ENCODE measurements at regions of chr7 and their contacts with region 1.

Region 1: GRCh38 chr7:100793806-100794660 is 33.3 kb downstream of the EPHB4 start:
- DNase-seq: no peak
- H3K4me3 ChIP-seq: no peak overlapping the region
- H3K27ac ChIP-seq: no peak overlapping the region
- H3K4me1 ChIP-seq: no peaks in the 10 kb centered on the region
- H3K27me3 ChIP-seq: peaks cover 20% of the 10 kb centered on the region
- CTCF ChIP-seq: no peak
- EP300 ChIP-seq: no peak
- POLR2A ChIP-seq: no peak

Region 2: DNA sequence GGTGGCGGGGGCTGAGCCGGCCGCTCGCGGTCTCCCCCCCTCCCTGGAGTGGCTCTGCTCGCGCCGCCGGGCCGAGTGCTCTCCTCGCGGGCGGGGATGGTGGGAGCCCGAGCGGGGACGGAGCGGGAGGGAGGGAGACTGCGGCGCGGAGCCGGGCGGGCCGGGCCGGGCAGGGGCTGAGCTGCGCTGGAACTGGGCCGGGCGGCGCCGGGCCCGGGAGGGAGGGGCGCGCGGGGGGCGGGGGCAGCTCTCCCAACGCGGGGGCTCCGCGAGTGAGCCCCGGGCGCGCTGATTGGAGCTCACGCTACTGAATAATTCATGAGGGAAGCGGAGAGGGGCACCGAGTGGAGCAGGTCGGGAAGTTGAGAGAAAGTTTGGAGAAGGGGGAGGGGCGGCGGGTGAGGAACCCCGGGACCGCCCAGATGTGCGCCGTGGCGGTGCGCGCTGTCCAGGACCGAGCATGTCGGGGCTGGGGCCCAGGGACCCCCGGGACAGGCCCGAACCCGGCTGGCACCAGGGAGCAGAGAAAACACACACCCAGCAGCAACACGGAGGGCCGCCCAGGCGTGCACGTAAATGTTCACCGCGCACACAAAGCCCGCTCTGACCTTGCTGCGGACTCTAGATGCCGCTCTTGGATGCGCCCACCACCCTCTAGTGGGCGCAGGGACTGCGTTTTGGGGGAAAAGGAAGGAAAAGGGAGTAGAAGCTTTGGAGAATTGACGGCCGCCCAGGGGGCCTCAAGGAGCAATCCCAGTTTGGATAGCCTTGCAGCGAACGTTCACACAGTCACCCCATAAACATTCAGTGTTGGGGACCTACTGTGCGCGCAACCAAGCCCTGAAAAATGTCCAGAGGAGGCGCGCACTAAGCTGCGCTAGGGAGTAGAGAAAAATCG is 33.5 kb after region 1 on chr7 and contains the start of gene EPHB4:
- in situ Hi-C with region 1: no loop called
- intact Hi-C with region 1: loop called (anchors 1 kb)
- DNase-seq: peak; percentile 83
- H3K4me3 ChIP-seq: peak within 1 kb of the TSS; percentile 62 to 85 (median 79)
- H3K27ac ChIP-seq: peak within 1 kb of the TSS; percentile 81 to 94 (median 90)
- H3K4me1 ChIP-seq: peaks cover 0 to 48% (median 39%) of the 10 kb centered on the region in 4 donors
- H3K27me3 ChIP-seq: peaks cover 14% of the 10 kb centered on the region
- CTCF ChIP-seq: peak in 3 of 5 experiments; percentile 9 to 17 (median 11)
- EP300 ChIP-seq: no peak
- POLR2A ChIP-seq: peak; percentile 22
- total RNA-seq, gene EPHB4: 23.2 to 95.5 (median 43.5) TPM

Measured in transverse colon (tissue), 4 donors.